ENCODE measurements at regions of chr3 and their contacts with region 1.

Region 1: GRCh38 chr3:100334488-100335351 is at the start of gene NIT2:
- DNase-seq: peak; percentile 97
- H3K4me3 ChIP-seq: peak within 1 kb of the TSS; percentile 54 to 95 (median 72)
- H3K27ac ChIP-seq: peak within 1 kb of the TSS; percentile 50 to 91 (median 84)
- H3K4me1 ChIP-seq: peaks cover 6 to 27% (median 20%) of the 10 kb centered on the region in 6 donors
- H3K27me3 ChIP-seq: no peaks in the 10 kb centered on the region
- CTCF ChIP-seq: peak in 1 of 11 experiments; percentile 11
- POLR2A ChIP-seq: peak in 1 of 3 donors; percentile 17
- total RNA-seq, gene NIT2: 16.8 to 29.3 (median 24.7) TPM

Region 2: GRCh38 chr3:100184948-100185570 is 149.7 kb before region 1 on chr3:
- intact Hi-C with region 1: no loop called
- DNase-seq: no peak
- H3K4me3 ChIP-seq: no peak overlapping the region
- H3K27ac ChIP-seq: peak overlapping the region in 7 of 8 donors; percentile 13 to 62 (median 35)
- H3K4me1 ChIP-seq: peaks cover 0 to 14% (median 6%) of the 10 kb centered on the region in 6 donors
- H3K27me3 ChIP-seq: no peaks in the 10 kb centered on the region
- CTCF ChIP-seq: no peak
- POLR2A ChIP-seq: no peak

Region 3: DNA sequence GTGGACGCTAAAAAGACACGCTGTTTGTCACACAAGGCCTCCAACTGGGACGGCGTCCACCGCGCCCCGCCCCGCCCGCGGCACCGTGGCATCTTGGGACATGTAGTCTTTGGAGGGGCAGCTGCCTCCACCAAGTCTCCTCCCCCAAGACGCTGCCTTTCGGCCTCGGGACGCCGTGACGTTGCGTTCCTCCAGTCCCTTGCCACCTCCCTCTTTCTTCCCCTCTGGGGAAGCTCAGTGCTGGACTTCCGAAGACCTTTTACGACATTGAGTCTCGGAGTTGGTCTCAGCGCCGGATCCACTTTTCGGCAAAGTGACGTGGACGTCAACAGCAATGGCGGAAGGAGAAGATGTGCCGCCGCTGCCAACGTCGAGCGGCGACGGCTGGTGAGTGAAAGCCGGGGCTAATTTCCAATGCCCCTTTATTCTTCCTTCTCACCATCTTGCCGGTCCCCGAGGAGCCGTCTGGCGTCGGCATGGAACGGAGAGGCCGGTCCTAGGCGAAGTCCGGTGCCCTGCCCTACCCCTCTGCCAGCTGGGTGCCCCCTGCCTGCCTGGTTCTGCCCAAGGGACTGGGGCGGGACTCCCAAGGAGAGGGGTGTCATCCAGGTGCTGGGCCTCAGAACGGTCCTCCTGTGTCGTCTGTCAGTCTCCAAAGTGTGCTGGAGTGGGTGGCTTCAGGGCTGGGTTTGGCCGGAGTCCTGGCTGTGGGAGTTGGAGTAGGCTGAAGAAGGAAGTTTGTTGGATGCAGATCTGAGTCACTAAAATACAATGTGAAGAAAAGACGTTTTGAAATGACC is 73.8 kb before region 1 on chr3 and contains the start of gene TBC1D23:
- intact Hi-C with region 1: loop called (anchors 5 kb)
- DNase-seq: peak; percentile 100
- H3K4me3 ChIP-seq: peak within 1 kb of the TSS; percentile 59 to 97 (median 88)
- H3K27ac ChIP-seq: peak within 1 kb of the TSS; percentile 92 to 99 (median 96)
- H3K4me1 ChIP-seq: peaks cover 24 to 70% (median 50%) of the 10 kb centered on the region in 6 donors
- H3K27me3 ChIP-seq: no peaks in the 10 kb centered on the region
- CTCF ChIP-seq: peak in 3 of 11 experiments; percentile 6 to 35 (median 33)
- POLR2A ChIP-seq: peak in 1 of 3 donors; percentile 90
- total RNA-seq, gene TBC1D23: 38.3 to 61.4 (median 44.7) TPM

Region 4: DNA sequence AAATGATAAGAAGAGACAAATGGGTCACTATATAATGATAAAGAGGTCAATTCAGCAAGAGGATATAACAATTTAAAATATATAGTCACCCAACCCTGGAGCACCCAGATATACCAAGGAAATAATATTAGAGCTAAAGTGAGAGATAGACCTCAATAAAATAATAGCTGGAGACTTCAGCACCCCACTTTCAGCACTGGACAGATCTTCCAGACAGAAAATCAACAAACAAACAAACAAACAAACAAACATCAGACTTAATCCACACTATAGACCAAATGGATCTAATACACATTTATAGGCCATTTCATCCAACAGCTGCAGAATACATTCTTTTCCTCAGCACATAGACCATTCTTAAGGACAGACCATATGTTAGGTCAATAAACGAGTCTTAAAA is 1098.9 kb after region 1 on chr3:
- intact Hi-C with region 1: no loop called
- DNase-seq: no peak
- H3K4me3 ChIP-seq: no peak overlapping the region
- H3K27ac ChIP-seq: no peak overlapping the region
- H3K4me1 ChIP-seq: no peaks in the 10 kb centered on the region
- H3K27me3 ChIP-seq: no peaks in the 10 kb centered on the region
- CTCF ChIP-seq: no peak
- POLR2A ChIP-seq: no peak